MCF 10A (cell line): ENCODE measurements at regions of chr12 and their contacts with region 1.

Region 1: DNA sequence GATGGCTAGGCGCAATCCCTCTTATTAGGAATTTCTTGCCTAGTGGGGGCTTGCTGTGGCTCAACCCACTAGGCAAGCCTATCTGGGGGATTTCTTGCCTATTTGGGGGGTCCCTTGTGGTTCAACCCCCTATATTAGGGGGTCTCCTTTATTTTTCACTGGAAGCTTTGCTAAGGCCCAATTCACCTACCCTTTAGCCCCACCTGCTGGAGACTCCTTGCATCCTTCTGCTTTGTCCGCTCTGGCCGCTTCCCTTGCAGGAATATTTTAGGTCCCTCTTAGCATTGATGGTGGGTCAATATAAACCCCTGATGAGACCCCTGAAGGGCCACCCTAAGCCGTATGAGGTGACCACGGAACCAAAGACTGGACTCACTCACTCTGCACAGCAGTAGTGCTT is 1552.1 kb downstream of the AACS start:
- DNase-seq: peak; percentile 62
- H3K4me3 Mint-ChIP-seq: no peak overlapping the region
- H3K27ac Mint-ChIP-seq: no peak overlapping the region
- H3K4me1 Mint-ChIP-seq: peaks cover 5% of the 10 kb centered on the region
- H3K27me3 Mint-ChIP-seq: no peaks in the 10 kb centered on the region
- CTCF ChIP-seq: peak; percentile 78

Region 2: GRCh38 chr12:125533434-125534029 is 1083.8 kb before region 1 on chr12:
- CTCF ChIA-PET with region 1: no interaction called
- POLR2A ChIA-PET with region 1: no interaction called
- intact Hi-C with region 1: loop called (anchors 2 kb)
- DNase-seq: peak; percentile 34
- H3K4me3 Mint-ChIP-seq: no peak overlapping the region
- H3K27ac Mint-ChIP-seq: no peak overlapping the region
- H3K4me1 Mint-ChIP-seq: no peaks in the 10 kb centered on the region
- H3K27me3 Mint-ChIP-seq: no peaks in the 10 kb centered on the region
- CTCF ChIP-seq: peak; percentile 90

Region 3: GRCh38 chr12:126347421-126347820 is 269.9 kb before region 1 on chr12:
- CTCF ChIA-PET with region 1: no interaction called
- POLR2A ChIA-PET with region 1: no interaction called
- intact Hi-C with region 1: loop called (anchors 5 kb)
- DNase-seq: no peak
- H3K4me3 Mint-ChIP-seq: no peak overlapping the region
- H3K27ac Mint-ChIP-seq: no peak overlapping the region
- H3K4me1 Mint-ChIP-seq: no peaks in the 10 kb centered on the region
- H3K27me3 Mint-ChIP-seq: no peaks in the 10 kb centered on the region
- CTCF ChIP-seq: peak; percentile 17

Region 4: GRCh38 chr12:126582231-126582630 is 35.1 kb before region 1 on chr12:
- CTCF ChIA-PET with region 1: no interaction called
- POLR2A ChIA-PET with region 1: no interaction called
- intact Hi-C with region 1: no loop called
- DNase-seq: peak; percentile 43
- H3K4me3 Mint-ChIP-seq: no peak overlapping the region
- H3K27ac Mint-ChIP-seq: no peak overlapping the region
- H3K4me1 Mint-ChIP-seq: peaks cover 7% of the 10 kb centered on the region
- H3K27me3 Mint-ChIP-seq: no peaks in the 10 kb centered on the region
- CTCF ChIP-seq: no peak